ENCODE measurements at regions of chr2 and their contacts with region 1.

Region 1: DNA sequence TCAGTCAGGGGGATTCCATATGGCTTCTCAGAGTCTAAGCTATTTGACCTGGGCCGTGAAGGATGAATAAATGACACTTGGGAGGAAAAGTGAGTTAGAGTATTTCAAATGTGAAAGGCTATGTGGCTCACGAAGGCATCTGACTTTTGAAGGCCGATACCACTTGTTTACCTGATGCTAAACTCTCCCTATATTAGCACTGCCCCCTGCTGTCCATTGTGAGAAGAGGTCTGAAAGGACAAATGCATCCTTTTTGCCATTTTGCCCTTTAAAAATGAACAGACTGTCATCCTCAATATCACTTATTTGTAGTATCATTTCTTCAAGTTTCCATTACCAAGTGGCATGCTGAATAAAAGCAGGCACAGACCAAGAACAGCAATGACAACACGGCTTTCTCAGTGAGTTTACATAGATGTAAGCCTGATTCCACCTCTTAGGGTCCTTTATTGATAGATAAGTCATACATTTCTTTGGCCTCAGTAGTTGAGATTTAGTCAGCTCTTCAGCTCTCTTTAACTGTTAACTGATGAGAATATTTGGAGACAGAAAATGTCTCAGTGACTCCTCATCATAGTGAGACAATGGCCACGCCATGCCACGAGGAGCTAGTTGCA is 40.1 kb downstream of the DOCK10 start:
- DNase-seq: peak; percentile 28 to 89 (median 72)
- ATAC-seq: peak; percentile 84
- H3K4me3 ChIP-seq: peak overlapping the region in 1 of 2 experiments; percentile 17
- H3K4me3 Mint-ChIP-seq: peak overlapping the region; percentile 29
- H3K27ac ChIP-seq: peak overlapping the region; percentile 18 to 52
- H3K27ac Mint-ChIP-seq: peak overlapping the region; percentile 86
- H3K4me1 ChIP-seq: peaks cover 38% of the 10 kb centered on the region
- H3K4me1 Mint-ChIP-seq: peaks cover 87% of the 10 kb centered on the region
- H3K27me3 ChIP-seq: no peaks in the 10 kb centered on the region
- H3K27me3 Mint-ChIP-seq: no peaks in the 10 kb centered on the region
- CTCF ChIP-seq: peak; percentile 82

Region 2: GRCh38 chr2:224885836-224886547 is 116.2 kb before region 1 on chr2:
- CTCF ChIA-PET with region 1: interaction called, 12 read pairs
- POLR2A ChIA-PET with region 1: no interaction called
- intact Hi-C with region 1: loop called (anchors 1 to 2 kb)
- DNase-seq: peak in 1 of 9 experiments; percentile 18
- ATAC-seq: no peak
- H3K4me3 ChIP-seq: no peak overlapping the region
- H3K4me3 Mint-ChIP-seq: no peak overlapping the region
- H3K27ac ChIP-seq: peak overlapping the region in 1 of 2 experiments; percentile 12
- H3K27ac Mint-ChIP-seq: peak overlapping the region; percentile 84
- H3K4me1 ChIP-seq: peaks cover 11% of the 10 kb centered on the region
- H3K4me1 Mint-ChIP-seq: peaks cover 46% of the 10 kb centered on the region
- H3K27me3 ChIP-seq: no peaks in the 10 kb centered on the region
- H3K27me3 Mint-ChIP-seq: no peaks in the 10 kb centered on the region
- CTCF ChIP-seq: no peak

Region 3: DNA sequence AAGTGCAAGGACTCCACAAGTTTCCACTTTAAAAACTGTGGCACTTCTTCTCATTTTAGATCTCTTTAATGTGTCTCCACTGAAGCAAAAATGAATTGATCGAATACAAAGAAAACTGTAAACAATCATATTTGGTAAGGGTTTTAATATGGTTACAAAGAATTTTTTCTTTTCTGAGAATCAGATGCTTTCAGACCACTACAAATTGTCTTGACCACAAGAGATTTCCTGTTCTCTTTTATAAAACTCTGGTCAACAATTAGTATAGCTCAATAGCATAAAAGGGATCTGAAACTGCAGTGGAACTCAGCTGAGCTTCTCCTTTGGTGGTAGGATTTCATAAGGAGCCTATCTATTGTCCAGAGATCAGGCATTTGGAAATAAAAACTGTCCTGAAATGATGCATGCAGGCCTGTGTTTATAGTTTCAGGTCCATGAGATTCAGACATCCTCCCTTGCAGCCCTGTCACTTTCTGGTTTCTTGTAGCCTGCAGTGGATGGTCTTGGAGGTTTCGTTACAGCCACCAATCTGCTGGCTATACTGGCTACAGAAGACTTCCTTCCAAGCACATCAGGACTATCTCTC is 79.9 kb before region 1 on chr2:
- CTCF ChIA-PET with region 1: interaction called, 37 read pairs
- POLR2A ChIA-PET with region 1: no interaction called
- intact Hi-C with region 1: no loop called
- DNase-seq: peak in 1 of 9 experiments; percentile 41
- ATAC-seq: no peak
- H3K4me3 ChIP-seq: no peak overlapping the region
- H3K4me3 Mint-ChIP-seq: peak overlapping the region; percentile 4
- H3K27ac ChIP-seq: peak overlapping the region in 1 of 2 experiments; percentile 77
- H3K27ac Mint-ChIP-seq: peak overlapping the region; percentile 85
- H3K4me1 ChIP-seq: peaks cover 57% of the 10 kb centered on the region
- H3K4me1 Mint-ChIP-seq: peaks cover 57% of the 10 kb centered on the region
- H3K27me3 ChIP-seq: no peaks in the 10 kb centered on the region
- H3K27me3 Mint-ChIP-seq: no peaks in the 10 kb centered on the region
- CTCF ChIP-seq: no peak

Region 4: DNA sequence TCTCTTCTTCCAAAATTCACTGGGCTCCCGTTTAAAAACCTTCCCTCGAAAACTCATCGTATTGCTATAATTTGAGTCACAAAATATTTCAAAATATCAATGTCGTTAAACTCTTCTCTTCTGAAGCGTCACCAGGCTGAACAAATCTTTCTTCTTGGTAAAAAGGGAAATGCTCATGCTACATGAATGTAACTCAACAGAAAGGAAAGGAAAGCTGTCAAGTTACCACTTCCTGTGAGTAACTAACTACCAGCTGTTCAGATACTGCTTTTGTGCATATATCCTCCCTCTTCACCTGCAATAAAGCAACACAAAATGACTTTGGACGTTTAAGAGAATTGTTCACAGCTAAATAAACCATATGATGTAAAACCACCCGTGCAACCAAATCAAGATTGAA is 55.3 kb before region 1 on chr2:
- CTCF ChIA-PET with region 1: interaction called, 63 read pairs
- POLR2A ChIA-PET with region 1: interaction called, 3 read pairs
- intact Hi-C with region 1: loop called in 1 of 2 experiments (anchors 2 kb)
- DNase-seq: peak in 2 of 9 experiments; percentile 64 to 84
- ATAC-seq: peak; percentile 78
- H3K4me3 ChIP-seq: peak overlapping the region; percentile 59 to 76
- H3K4me3 Mint-ChIP-seq: peak overlapping the region; percentile 89
- H3K27ac ChIP-seq: peak overlapping the region; percentile 72 to 81
- H3K27ac Mint-ChIP-seq: peak overlapping the region; percentile 97
- H3K4me1 ChIP-seq: peaks cover 73% of the 10 kb centered on the region
- H3K4me1 Mint-ChIP-seq: peaks cover 76% of the 10 kb centered on the region
- H3K27me3 ChIP-seq: no peaks in the 10 kb centered on the region
- H3K27me3 Mint-ChIP-seq: no peaks in the 10 kb centered on the region
- CTCF ChIP-seq: no peak

Region 5: GRCh38 chr2:224982910-224983711 is 19.0 kb before region 1 on chr2:
- CTCF ChIA-PET with region 1: interaction called, 69 read pairs
- POLR2A ChIA-PET with region 1: interaction called, 6 read pairs
- intact Hi-C with region 1: loop called in 1 of 2 experiments (anchors 2 kb)
- DNase-seq: peak in 8 of 9 experiments; percentile 34 to 77 (median 52)
- ATAC-seq: peak; percentile 45
- H3K4me3 ChIP-seq: no peak overlapping the region
- H3K4me3 Mint-ChIP-seq: peak overlapping the region; percentile 65
- H3K27ac ChIP-seq: peak overlapping the region; percentile 43 to 69
- H3K27ac Mint-ChIP-seq: peak overlapping the region; percentile 91
- H3K4me1 ChIP-seq: peaks cover 63% of the 10 kb centered on the region
- H3K4me1 Mint-ChIP-seq: peaks cover 81% of the 10 kb centered on the region
- H3K27me3 ChIP-seq: no peaks in the 10 kb centered on the region
- H3K27me3 Mint-ChIP-seq: no peaks in the 10 kb centered on the region
- CTCF ChIP-seq: no peak

Region 6: GRCh38 chr2:225660262-225661131 is 658.4 kb after region 1 on chr2:
- CTCF ChIA-PET with region 1: interaction called, 21 read pairs
- POLR2A ChIA-PET with region 1: interaction called, 3 read pairs
- intact Hi-C with region 1: loop called in 1 of 2 experiments (anchors 1 kb)
- DNase-seq: peak; percentile 37 to 82 (median 72)
- ATAC-seq: peak; percentile 62
- H3K4me3 ChIP-seq: no peak overlapping the region
- H3K4me3 Mint-ChIP-seq: no peak overlapping the region
- H3K27ac ChIP-seq: no peak overlapping the region
- H3K27ac Mint-ChIP-seq: no peak overlapping the region
- H3K4me1 ChIP-seq: no peaks in the 10 kb centered on the region
- H3K4me1 Mint-ChIP-seq: peaks cover 2% of the 10 kb centered on the region
- H3K27me3 ChIP-seq: no peaks in the 10 kb centered on the region
- H3K27me3 Mint-ChIP-seq: peaks cover 15% of the 10 kb centered on the region
- CTCF ChIP-seq: peak; percentile 90

Region 7: GRCh38 chr2:226828191-226828590 is 1826.0 kb after region 1 on chr2:
- CTCF ChIA-PET with region 1: no interaction called
- POLR2A ChIA-PET with region 1: no interaction called
- intact Hi-C with region 1: no loop called
- DNase-seq: no peak
- ATAC-seq: no peak
- H3K4me3 ChIP-seq: no peak overlapping the region
- H3K4me3 Mint-ChIP-seq: no peak overlapping the region
- H3K27ac ChIP-seq: no peak overlapping the region
- H3K27ac Mint-ChIP-seq: no peak overlapping the region
- H3K4me1 ChIP-seq: no peaks in the 10 kb centered on the region
- H3K4me1 Mint-ChIP-seq: peaks cover 1% of the 10 kb centered on the region
- H3K27me3 ChIP-seq: no peaks in the 10 kb centered on the region
- H3K27me3 Mint-ChIP-seq: no peaks in the 10 kb centered on the region
- CTCF ChIP-seq: no peak